ENCODE measurements at regions of chr15 and their contacts with region 1.

Region 1: DNA sequence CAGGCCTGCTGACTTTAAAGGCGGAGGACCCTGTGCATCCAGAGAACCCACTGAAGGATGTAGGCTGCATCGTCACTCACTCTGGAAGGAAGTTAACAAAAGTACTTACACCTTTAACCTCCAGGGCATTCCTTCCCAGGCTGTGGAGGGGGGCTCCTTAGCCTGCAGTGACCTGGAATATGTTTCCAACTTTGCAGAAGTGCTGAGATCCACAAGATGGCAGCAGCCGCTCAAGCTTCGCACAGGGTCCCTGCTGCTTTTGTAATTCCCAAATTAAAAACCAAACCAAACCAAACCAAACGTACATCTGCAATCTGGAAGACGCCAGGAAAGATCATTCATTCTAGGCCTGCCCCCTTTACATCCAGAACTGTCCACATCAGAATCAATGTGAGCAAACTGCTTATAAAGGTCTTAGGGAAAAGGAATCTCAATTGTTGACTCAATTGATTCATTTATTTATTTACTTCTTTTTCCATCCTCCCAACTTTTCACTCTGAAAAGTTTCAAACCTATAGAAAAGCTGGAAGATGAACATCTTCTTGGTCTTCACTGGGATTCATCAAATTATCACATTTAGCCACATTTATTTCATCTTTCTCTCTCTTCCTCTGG is 70.5 kb upstream of the KLHL25 start:
- DNase-seq: no peak
- H3K4me3 ChIP-seq: no peak overlapping the region
- H3K27ac ChIP-seq: no peak overlapping the region
- H3K4me1 ChIP-seq: no peaks in the 10 kb centered on the region
- H3K27me3 ChIP-seq: no peaks in the 10 kb centered on the region
- CTCF ChIP-seq: peak; percentile 30

Region 2: DNA sequence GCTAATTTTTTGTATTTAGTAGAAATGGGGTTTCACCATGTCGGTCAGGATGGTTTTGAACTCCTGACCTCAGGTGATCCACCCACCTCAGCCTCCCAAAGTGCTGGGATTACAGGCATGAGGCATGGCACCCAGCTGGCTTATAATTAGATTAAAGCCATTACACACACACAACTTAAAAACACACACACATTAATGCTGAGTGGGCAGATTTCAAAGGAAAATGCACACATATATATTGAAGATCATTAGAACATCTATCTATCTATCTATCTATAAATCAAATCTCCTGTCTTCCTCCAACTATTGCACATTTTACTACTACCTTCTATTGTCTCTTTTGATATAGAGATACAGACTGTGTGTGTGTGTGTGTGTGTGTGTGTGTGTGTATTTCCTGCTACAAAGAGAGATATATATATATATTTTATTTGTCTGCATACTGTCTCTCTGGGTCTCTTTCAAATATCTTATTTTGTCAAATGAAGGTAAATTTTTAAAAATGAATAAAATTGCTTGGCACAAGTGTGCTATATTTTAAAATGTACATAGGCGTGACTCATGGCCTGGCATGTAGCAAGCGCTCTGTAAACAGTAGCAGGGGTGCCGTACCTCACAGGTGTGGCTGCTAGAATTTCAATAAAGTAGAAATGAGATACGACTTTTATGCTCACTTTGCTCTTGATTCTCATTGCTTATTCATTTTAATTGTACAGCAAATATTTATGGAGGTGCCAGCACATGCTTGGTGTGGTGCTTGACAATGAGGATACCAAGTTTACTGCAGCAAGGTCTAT is 870.3 kb after region 1 on chr15:
- intact Hi-C with region 1: loop called (anchors 10 kb)
- DNase-seq: peak; percentile 41
- H3K4me3 ChIP-seq: no peak overlapping the region
- H3K27ac ChIP-seq: no peak overlapping the region
- H3K4me1 ChIP-seq: no peaks in the 10 kb centered on the region
- H3K27me3 ChIP-seq: no peaks in the 10 kb centered on the region
- CTCF ChIP-seq: no peak

Measured in colonic mucosa (tissue), 4 donors.